Activated B cell treated with CpG ODN at 0.5 μM for 24 hours (primary cell): ENCODE measurements at regions of chr16 and their contacts with region 1.

Region 1: GRCh38 chr16:53054670-53055485 is at the start of gene CHD9:
- DNase-seq: peak; percentile 83
- ATAC-seq: peak; percentile 89
- H3K4me3 Mint-ChIP-seq: peak within 1 kb of the TSS; percentile 91
- H3K27ac Mint-ChIP-seq: peak within 1 kb of the TSS; percentile 85
- H3K4me1 Mint-ChIP-seq: peaks cover 46% of the 10 kb centered on the region
- H3K27me3 Mint-ChIP-seq: no peaks in the 10 kb centered on the region
- CTCF ChIP-seq: peak; percentile 97
- total RNA-seq, gene CHD9: 65.0 and 67.4 TPM in 2 replicates

Region 2: DNA sequence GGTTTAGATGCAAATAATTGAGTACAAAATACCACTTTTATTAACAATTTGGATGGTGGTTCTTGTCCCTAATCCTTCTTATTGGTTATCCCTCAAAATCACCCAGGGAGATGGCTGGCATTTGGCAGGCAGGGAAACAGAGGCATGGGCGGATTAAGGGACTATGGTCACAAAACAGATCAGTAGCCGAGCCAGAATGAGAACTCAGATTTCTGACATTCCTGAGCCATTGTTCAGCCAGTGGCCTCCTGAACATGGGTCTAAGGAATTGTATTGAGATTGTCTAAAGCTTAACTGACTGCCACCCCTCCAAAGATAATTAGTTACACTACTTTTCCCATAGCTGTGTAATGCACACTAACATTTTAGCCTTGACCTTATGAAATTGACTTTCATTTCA is 90.6 kb before region 1 on chr16:
- CTCF ChIA-PET with region 1: no interaction called
- POLR2A ChIA-PET with region 1: no interaction called
- intact Hi-C with region 1: no loop called
- DNase-seq: no peak
- ATAC-seq: no peak
- H3K4me3 Mint-ChIP-seq: no peak overlapping the region
- H3K27ac Mint-ChIP-seq: no peak overlapping the region
- H3K4me1 Mint-ChIP-seq: no peaks in the 10 kb centered on the region
- H3K27me3 Mint-ChIP-seq: no peaks in the 10 kb centered on the region
- CTCF ChIP-seq: no peak

Region 3: DNA sequence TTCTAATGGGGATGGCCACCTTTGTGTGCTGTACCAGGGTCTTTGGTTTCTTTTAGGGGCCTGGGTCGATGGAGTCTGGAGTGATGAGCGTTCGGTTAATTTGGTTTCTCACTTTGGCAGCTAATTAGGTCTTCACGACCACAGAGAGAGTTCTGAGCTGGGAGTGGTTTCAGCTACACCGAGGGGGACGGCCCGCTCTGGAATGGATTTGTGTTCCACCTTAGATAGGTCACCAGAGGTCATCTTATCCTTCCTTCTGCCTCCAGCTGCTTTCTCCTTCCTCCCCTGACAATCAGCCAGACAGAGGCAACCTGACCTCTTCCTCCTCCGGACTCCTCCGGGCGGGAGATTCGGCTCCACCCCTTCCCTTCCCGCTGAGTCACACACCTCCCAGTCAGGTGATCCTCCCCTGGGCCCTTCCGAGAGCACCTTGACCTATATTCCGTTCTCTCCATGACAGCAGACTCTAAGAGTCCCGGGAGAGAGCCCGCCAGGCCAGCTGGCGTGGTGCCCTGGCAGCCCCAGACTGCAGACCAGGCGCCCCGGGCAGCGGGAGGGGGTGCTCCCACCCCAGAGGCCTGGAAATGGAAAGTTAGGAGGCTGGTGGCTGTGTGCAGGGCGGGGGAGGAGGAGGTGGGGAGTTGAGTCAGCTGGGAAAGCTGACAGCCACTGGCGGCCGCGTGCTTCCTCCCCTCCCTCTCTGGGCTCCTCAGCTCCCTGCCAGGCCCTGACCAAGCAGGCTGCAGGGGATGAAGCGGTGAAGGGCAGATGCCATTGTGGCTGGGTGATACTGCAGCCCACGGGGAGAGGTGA is 44.6 kb after region 1 on chr16:
- CTCF ChIA-PET with region 1: interaction called, 45 read pairs
- POLR2A ChIA-PET with region 1: interaction called, 30 read pairs
- intact Hi-C with region 1: loop called (anchors 1 kb)
- DNase-seq: peak; percentile 43
- ATAC-seq: peak; percentile 43
- H3K4me3 Mint-ChIP-seq: peak overlapping the region; percentile 83
- H3K27ac Mint-ChIP-seq: peak overlapping the region; percentile 93
- H3K4me1 Mint-ChIP-seq: peaks cover 69% of the 10 kb centered on the region
- H3K27me3 Mint-ChIP-seq: no peaks in the 10 kb centered on the region
- CTCF ChIP-seq: no peak

Region 4: GRCh38 chr16:53159781-53160436 is 105.0 kb after region 1 on chr16:
- CTCF ChIA-PET with region 1: interaction called, 95 read pairs
- POLR2A ChIA-PET with region 1: interaction called, 3 read pairs
- intact Hi-C with region 1: loop called (anchors 1 kb)
- DNase-seq: no peak
- ATAC-seq: peak; percentile 81
- H3K4me3 Mint-ChIP-seq: no peak overlapping the region
- H3K27ac Mint-ChIP-seq: peak overlapping the region; percentile 18
- H3K4me1 Mint-ChIP-seq: peaks cover 4% of the 10 kb centered on the region
- H3K27me3 Mint-ChIP-seq: no peaks in the 10 kb centered on the region
- CTCF ChIP-seq: peak; percentile 88

Region 5: DNA sequence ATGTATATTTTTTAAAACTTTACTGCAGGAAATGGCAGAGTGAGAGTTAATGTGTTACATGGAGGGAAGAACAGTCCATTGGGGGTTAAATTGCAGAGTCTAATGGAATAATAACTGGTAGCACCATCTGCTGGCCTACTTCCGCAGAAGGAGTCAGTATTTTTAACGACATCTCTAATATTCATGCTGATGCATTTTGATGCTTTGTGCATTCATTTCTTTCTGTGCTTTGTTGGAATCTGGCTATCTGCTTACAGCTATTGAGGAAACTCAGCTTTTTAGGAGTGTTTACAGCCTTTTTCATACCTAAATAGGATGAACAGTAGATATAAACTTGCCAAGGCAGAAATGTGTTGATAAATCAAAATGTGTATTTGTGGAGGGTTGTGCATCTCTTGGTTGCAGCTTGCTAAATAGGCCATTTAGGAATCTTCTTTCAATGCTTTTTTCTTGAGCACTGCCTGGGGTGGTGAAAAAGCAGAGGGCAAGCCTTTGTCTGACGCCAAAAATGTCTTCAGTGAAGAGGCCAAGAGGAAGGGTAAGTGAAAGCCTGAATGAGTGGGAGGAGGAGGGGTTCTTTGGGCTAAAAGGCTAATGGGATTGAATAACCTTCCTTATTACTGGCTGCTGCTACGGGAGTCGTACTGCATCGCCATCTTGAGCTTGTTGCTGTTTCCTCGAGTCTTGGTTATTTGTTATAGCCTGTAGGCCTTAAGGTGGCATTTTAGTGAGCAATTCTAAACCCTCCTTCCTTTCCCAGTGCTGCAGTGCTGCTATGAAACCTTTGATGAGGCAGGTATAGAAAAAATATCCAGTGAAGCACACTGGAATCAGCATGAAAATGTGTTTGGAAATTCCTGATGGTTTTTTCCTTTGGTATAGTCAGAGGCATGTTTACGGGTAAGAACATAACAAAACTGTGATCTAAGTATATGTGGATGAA is 153.2 kb after region 1 on chr16:
- CTCF ChIA-PET with region 1: interaction called, 50 read pairs
- POLR2A ChIA-PET with region 1: interaction called, 9 read pairs
- intact Hi-C with region 1: loop called (anchors 1 kb)
- DNase-seq: no peak
- ATAC-seq: peak; percentile 81
- H3K4me3 Mint-ChIP-seq: peak overlapping the region; percentile 88
- H3K27ac Mint-ChIP-seq: peak overlapping the region; percentile 97
- H3K4me1 Mint-ChIP-seq: peaks cover 32% of the 10 kb centered on the region
- H3K27me3 Mint-ChIP-seq: no peaks in the 10 kb centered on the region
- CTCF ChIP-seq: no peak

Region 6: DNA sequence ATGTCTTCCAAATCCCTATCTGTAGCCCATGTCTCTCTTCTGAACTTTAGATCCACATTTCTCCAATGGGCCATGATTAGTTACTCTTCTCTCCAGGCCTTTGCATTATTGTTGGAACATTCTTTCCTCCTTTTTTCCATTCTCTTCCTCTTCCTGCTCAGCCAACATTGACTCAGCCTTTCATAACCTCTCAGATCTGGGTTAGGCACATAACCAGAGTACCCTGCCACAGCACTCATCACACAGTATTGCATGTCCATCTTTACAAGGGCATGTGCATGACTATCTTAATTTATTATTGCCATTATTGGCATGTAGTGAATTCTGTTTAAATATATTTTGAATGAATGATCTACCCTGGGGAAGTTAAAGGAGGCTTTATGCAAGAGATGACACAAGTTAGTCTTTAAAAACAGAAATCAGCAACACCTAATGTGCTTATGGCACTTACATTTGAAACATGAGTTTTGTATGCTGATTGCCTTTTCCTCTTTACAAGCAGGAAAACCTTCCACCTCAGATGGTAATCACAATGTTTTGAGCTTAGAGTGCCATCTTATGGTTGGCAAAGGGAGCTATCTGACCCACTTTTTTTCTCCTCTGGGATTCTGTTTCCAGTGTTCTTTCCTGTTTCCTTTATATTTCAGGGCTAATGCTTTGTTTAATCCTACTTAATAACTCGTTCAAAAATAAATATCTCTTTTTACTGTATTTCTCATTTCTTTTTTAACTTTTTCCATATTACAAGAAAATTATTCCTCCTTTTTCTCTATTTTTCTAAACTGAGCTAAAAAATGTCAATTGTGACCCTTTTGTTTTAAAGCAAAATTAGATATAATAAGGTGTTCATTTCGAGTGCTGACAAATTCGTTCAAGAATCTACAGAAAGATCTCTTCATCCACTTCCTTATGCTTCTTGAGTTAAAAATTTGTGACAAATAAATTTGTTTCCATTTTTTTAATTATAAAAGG is 228.4 kb after region 1 on chr16:
- CTCF ChIA-PET with region 1: interaction called, 12 read pairs
- POLR2A ChIA-PET with region 1: no interaction called
- intact Hi-C with region 1: loop called (anchors 1 kb)
- DNase-seq: no peak
- ATAC-seq: no peak
- H3K4me3 Mint-ChIP-seq: no peak overlapping the region
- H3K27ac Mint-ChIP-seq: no peak overlapping the region
- H3K4me1 Mint-ChIP-seq: no peaks in the 10 kb centered on the region
- H3K27me3 Mint-ChIP-seq: no peaks in the 10 kb centered on the region
- CTCF ChIP-seq: no peak